Heart left ventricle (tissue), 16 donors: ENCODE measurements at regions of chr11 and their contacts with region 1.

Region 1: GRCh38 chr11:47538741-47539574 is 14.0 kb downstream of the CELF1 start:
- DNase-seq: no peak
- ATAC-seq: peak in 1 of 4 donors; percentile 28
- H3K4me3 ChIP-seq: no peak overlapping the region
- H3K27ac ChIP-seq: peak overlapping the region in 2 of 12 donors; percentile 10 to 24
- H3K4me1 ChIP-seq: peaks cover 6 to 85% (median 61%) of the 10 kb centered on the region in 12 donors
- H3K27me3 ChIP-seq: no peaks in the 10 kb centered on the region
- CTCF ChIP-seq: no peak
- POLR2A ChIP-seq: no peak

Region 2: DNA sequence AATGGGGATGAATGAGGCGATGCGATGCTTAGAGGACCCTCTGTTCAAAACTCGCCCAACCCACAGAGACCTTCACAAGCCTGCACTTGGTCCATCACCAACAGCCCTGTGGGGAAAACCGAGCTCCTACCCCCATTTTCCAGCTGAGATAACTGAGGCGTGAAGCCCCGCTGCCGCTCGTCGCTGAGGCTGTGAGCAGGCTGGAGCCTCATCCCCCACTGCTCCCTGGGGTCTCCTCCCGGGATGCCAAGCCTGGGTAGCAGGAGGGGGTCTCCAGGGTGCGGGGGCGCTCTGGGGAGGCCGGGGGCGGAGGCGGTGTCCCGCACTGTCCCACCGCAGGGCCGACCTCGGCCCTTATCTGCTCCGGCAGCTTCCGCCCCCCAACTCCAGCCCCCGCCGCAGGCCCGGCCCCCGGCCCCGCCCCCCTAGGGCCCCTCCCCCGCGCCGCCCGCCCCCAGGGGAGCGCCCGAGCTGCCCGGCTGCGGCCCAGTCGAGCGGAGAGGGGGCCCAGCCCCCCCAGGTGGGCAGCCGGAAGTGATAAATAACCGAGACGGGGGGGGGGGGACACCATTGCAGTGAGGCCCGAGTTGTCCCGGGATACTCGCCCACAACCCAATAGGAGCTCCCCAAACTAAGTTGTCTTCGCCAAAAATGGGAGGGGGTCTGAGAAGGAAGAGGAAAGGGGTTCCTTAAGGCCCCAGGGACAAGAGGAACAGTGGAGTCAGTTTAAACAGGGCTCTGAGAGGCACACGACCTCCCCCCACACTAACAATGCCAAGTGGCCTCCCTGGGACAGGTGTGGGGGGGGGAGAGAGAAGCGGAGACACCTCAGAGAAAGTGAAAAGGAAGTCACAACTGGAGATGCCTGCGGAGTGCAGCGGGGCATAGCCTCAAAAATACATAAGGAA is 138.8 kb before region 1 on chr11:
- intact Hi-C with region 1: no loop called
- DNase-seq: peak in 2 of 5 donors; percentile 31 to 45
- ATAC-seq: peak; percentile 45 to 82 (median 69)
- H3K4me3 ChIP-seq: peak overlapping the region in 11 of 12 donors; percentile 34 to 66 (median 53)
- H3K27ac ChIP-seq: peak overlapping the region; percentile 64 to 94 (median 86)
- H3K4me1 ChIP-seq: peaks cover 0 to 30% (median 16%) of the 10 kb centered on the region in 12 donors
- H3K27me3 ChIP-seq: no peaks in the 10 kb centered on the region
- CTCF ChIP-seq: no peak
- POLR2A ChIP-seq: peak in 1 of 2 donors; percentile 48

Region 3: GRCh38 chr11:47466701-47467250 is 72.2 kb before region 1 on chr11:
- intact Hi-C with region 1: no loop called
- DNase-seq: peak in 4 of 5 donors; percentile 30 to 62 (median 56)
- ATAC-seq: peak; percentile 32 to 70 (median 63)
- H3K4me3 ChIP-seq: peak overlapping the region in 3 of 12 donors; percentile 5 to 28 (median 7)
- H3K27ac ChIP-seq: peak overlapping the region; percentile 41 to 79 (median 60)
- H3K4me1 ChIP-seq: peaks cover 3 to 49% (median 31%) of the 10 kb centered on the region in 12 donors
- H3K27me3 ChIP-seq: no peaks in the 10 kb centered on the region
- CTCF ChIP-seq: no peak
- POLR2A ChIP-seq: no peak

Region 4: GRCh38 chr11:47485110-47485509 is 53.8 kb before region 1 on chr11:
- intact Hi-C with region 1: loop called in 3 of 10 experiments (anchors 10 kb)
- DNase-seq: no peak
- ATAC-seq: no peak
- H3K4me3 ChIP-seq: no peak overlapping the region
- H3K27ac ChIP-seq: no peak overlapping the region
- H3K4me1 ChIP-seq: peaks cover 0 to 32% (median 11%) of the 10 kb centered on the region in 12 donors
- H3K27me3 ChIP-seq: no peaks in the 10 kb centered on the region
- CTCF ChIP-seq: no peak
- POLR2A ChIP-seq: no peak

Region 5: DNA sequence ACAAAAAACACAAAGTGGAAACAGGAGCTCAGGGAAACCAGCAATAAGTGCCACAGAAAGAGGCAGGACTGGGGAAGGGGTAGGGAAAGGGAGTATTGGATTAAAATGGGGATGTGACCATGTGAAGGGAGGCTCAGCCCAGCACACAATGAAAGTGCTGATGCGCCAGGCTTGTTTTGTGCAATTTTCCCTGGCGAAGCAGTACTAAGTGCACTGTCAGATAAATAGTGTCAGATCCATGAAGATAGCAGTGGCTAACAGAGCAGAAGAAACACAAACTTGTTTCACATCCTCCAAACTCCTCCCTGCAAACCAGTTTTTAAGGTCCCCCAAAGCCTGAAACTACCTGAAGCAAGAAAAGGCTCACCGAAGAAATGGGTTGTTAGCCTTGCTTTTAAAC is 39.3 kb before region 1 on chr11:
- intact Hi-C with region 1: loop called in 2 of 10 experiments (anchors 5 to 10 kb)
- DNase-seq: peak in 2 of 5 donors; percentile 37 to 56
- ATAC-seq: peak in 3 of 4 donors; percentile 40 to 67 (median 66)
- H3K4me3 ChIP-seq: peak overlapping the region in 2 of 12 donors; percentile 1 to 25
- H3K27ac ChIP-seq: peak overlapping the region in 3 of 12 donors; percentile 9 to 84 (median 28)
- H3K4me1 ChIP-seq: peaks cover 4 to 83% (median 57%) of the 10 kb centered on the region in 12 donors
- H3K27me3 ChIP-seq: no peaks in the 10 kb centered on the region
- CTCF ChIP-seq: no peak
- POLR2A ChIP-seq: no peak

Region 6: DNA sequence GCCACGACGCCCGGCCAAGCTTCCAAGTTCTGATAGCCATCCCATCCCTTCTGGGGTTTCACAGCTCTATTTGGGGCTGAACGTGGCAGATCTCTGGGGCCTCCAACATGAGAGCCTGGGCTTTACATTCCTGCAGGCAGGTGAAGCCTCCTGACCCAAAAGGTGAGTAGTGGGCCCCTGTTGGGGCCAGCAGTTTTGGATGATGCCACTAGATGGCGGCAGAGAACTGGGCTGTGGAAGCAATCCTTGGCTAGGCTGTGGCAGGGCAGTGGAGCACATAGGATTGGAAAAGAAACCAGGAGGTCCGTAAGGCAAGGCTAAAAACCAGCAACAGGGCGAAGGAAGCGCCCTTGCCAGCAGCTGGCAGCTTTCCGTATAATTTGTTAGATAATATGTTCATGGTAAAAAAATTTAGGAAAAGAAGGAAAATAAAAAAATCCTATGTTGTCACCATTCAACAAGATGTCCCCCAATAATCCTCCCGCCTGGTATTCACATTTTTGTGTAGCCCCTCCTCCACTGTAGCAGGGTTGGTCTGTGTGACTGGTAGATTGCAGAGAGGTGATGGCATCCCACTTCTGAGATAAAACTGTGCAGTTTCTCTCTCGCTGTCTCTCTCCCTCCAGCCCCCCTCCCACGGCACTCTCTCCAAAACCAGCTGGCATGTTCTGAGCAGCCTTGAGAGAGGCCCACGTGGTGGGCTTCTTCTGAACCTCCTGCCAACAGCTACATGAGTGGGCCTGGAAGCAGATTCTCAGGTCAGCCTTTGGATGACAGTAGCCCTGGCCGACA is 634.1 kb after region 1 on chr11:
- intact Hi-C with region 1: no loop called
- DNase-seq: peak; percentile 59 to 82 (median 69)
- ATAC-seq: peak; percentile 48 to 73 (median 66)
- H3K4me3 ChIP-seq: peak overlapping the region in 3 of 12 donors; percentile 13 to 28 (median 26)
- H3K27ac ChIP-seq: peak overlapping the region in 11 of 12 donors; percentile 17 to 91 (median 71)
- H3K4me1 ChIP-seq: peaks cover 0 to 46% (median 29%) of the 10 kb centered on the region in 12 donors
- H3K27me3 ChIP-seq: no peaks in the 10 kb centered on the region
- CTCF ChIP-seq: peak; percentile 78 to 90 (median 84)
- POLR2A ChIP-seq: no peak